MCF 10A (cell line): ENCODE measurements at regions of chr1 and their contacts with region 1.

Region 1: GRCh38 chr1:244864253-244865027 is at the start of gene HNRNPU:
- DNase-seq: peak; percentile 99
- H3K4me3 Mint-ChIP-seq: peak within 1 kb of the TSS; percentile 93
- H3K27ac Mint-ChIP-seq: peak within 1 kb of the TSS; percentile 96
- H3K4me1 Mint-ChIP-seq: peaks cover 32% of the 10 kb centered on the region
- H3K27me3 Mint-ChIP-seq: no peaks in the 10 kb centered on the region
- CTCF ChIP-seq: peak; percentile 51
- total RNA-seq, gene HNRNPU: 454 and 572 TPM in 2 replicates

Region 2: GRCh38 chr1:244672946-244673682 is 191.3 kb before region 1 on chr1:
- CTCF ChIA-PET with region 1: no interaction called
- POLR2A ChIA-PET with region 1: no interaction called
- intact Hi-C with region 1: no loop called
- DNase-seq: no peak
- H3K4me3 Mint-ChIP-seq: no peak overlapping the region
- H3K27ac Mint-ChIP-seq: peak overlapping the region; percentile 21
- H3K4me1 Mint-ChIP-seq: peaks cover 24% of the 10 kb centered on the region
- H3K27me3 Mint-ChIP-seq: no peaks in the 10 kb centered on the region
- CTCF ChIP-seq: no peak

Region 3: DNA sequence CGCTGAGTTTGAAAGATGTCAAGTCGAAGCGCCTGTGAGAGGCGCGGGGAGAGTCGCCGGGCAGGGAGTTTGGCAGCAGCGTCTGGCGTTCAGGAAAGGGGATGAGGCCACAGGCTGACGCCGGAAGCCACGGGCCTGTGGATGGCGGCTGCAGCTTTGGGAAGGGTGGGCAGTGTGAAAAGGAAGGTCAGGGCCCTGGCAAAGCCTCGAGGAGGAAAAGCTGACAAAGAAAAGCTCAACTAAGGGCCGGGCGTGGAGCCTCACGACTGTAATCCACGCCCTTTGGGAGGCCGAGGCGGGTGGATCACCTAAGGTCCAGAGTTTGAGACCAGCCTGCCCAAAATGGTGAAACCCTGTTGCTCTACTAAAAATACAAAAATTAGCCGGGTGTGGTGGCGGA is 54.2 kb before region 1 on chr1:
- CTCF ChIA-PET with region 1: no interaction called
- POLR2A ChIA-PET with region 1: no interaction called
- intact Hi-C with region 1: no loop called
- DNase-seq: no peak
- H3K4me3 Mint-ChIP-seq: no peak overlapping the region
- H3K27ac Mint-ChIP-seq: no peak overlapping the region
- H3K4me1 Mint-ChIP-seq: no peaks in the 10 kb centered on the region
- H3K27me3 Mint-ChIP-seq: no peaks in the 10 kb centered on the region
- CTCF ChIP-seq: no peak

Region 4: GRCh38 chr1:244826712-244827111 is 37.7 kb before region 1 on chr1:
- CTCF ChIA-PET with region 1: no interaction called
- POLR2A ChIA-PET with region 1: interaction called, 45 read pairs
- intact Hi-C with region 1: no loop called
- DNase-seq: no peak
- H3K4me3 Mint-ChIP-seq: no peak overlapping the region
- H3K27ac Mint-ChIP-seq: no peak overlapping the region
- H3K4me1 Mint-ChIP-seq: peaks cover 6% of the 10 kb centered on the region
- H3K27me3 Mint-ChIP-seq: no peaks in the 10 kb centered on the region
- CTCF ChIP-seq: no peak

Region 5: DNA sequence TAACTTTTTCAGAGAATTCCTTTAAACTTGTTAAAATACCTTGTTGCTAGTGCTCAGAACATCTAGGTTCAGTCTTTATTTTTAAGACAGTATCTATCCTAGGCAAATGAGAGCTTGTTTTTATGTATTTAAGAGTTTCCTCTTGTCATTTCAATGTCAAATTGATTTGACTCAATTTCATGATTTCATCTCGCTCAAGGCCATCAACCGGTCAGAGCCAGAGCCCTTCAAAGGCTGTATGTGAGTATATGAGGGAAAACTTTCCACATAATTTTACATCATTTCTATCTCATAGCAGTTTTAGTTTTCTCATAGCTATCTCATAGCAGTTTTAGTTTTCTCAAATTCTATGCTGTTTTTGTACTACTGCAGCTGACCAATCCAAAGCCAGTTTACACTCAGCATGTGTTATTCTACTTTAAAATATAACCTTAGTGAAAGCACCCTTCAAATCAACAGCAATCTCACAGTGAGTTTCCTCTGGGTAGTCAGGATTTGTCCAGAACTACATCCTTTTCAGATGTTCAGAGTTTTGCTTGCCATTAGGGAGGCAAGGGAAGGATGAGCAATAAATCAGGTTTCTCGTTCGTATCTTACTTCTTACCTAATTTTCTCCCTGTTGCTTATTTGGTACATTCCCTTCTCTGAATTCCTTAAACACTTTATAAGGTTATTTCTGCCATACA is 12.8 kb before region 1 on chr1:
- CTCF ChIA-PET with region 1: interaction called, 31 read pairs
- POLR2A ChIA-PET with region 1: interaction called, 1,456 read pairs
- intact Hi-C with region 1: no loop called
- DNase-seq: no peak
- H3K4me3 Mint-ChIP-seq: no peak overlapping the region
- H3K27ac Mint-ChIP-seq: peak overlapping the region; percentile 43
- H3K4me1 Mint-ChIP-seq: peaks cover 25% of the 10 kb centered on the region
- H3K27me3 Mint-ChIP-seq: no peaks in the 10 kb centered on the region
- CTCF ChIP-seq: no peak

Region 6: DNA sequence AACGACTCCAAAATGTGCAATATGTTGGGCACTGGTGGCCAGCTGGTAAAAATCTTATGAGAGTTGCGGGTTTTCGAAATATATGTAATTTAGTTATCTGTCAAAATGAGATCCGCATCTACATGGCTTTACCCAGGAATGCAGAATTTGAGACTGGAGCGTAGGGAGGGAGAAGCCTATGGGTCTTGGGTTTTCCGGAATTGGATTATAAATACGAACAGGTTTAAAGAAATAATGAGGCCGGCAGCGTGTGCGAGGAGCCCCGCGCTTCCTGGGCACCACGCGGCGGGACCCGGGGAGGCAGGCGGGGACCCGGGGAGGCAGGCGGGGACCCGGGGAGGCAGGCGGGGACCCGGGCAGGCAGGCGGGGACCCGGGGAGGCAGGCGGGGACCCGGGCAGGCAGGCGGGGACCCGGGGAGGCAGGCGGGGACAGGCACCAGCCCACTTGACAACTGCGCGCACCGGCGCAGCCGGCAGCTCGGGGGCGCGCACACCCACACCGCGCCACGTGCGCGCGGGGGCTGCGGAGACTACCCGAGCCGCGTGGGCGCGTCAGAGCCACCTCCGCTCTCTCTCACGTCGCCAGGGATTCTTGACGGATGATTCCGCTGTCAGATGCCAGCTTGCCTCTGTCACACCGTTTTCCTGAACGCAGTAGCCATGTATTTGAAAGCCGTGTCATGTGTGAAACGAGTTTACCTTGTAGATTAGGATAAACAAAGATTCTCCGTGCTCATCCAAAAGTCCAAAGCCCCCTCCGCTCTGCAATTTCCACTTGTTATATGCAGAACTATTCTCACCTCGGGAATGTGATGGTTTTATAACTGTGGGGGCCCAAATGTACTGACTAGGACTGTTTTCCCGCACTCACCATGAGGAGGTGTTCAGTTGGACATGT is 54.2 kb after region 1 on chr1:
- CTCF ChIA-PET with region 1: interaction called, 3 read pairs
- POLR2A ChIA-PET with region 1: interaction called, 29 read pairs
- intact Hi-C with region 1: no loop called
- DNase-seq: peak; percentile 38
- H3K4me3 Mint-ChIP-seq: peak overlapping the region; percentile 89
- H3K27ac Mint-ChIP-seq: peak overlapping the region; percentile 81
- H3K4me1 Mint-ChIP-seq: peaks cover 6% of the 10 kb centered on the region
- H3K27me3 Mint-ChIP-seq: no peaks in the 10 kb centered on the region
- CTCF ChIP-seq: no peak

Region 7: DNA sequence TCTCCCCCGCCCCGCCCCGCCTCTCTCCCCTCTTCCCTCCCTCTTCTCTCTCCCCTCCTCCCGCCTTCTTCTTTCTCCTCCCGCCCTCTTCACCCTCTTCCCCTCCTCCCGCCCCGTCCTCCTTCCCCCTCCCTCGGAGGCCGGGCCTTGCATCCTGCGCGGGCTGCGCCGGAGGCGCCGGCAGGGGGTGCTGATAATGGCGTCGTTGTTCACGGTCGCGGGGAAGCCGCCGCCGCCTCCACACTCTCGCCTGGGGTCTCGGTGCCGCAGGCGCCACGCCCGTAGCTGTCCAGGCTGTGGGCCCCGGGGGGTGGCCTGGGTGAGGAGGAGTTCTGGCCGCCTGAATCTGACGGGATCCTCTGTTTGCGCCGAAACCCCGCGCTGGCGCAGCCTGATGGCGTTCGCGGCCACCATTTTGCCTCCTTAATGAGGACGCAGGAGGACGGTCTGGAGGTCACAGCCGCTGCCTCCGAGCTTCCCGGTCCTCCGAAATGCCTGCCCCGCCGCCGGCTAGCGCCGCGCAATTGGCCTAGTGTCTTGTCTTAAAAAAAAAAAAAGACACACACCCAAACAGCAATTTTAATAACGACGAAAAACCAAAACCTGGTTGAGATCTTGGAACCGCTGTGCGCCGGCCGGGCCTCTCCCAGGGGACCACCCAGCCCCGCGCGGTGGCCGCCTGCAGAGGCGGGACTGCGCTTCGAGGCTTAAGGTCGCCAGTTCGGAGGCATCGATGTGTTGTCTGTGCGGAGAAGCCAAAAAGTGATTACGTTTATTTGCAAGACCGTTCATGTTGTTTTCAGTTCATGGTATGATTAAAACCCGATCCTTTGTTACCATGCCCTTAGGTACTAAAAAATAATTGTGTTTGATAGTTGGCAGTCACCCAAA is 106.5 kb after region 1 on chr1:
- CTCF ChIA-PET with region 1: interaction called, 18 read pairs
- POLR2A ChIA-PET with region 1: interaction called, 719 read pairs
- intact Hi-C with region 1: loop called (anchors 1 kb)
- DNase-seq: peak; percentile 100
- H3K4me3 Mint-ChIP-seq: peak overlapping the region; percentile 98
- H3K27ac Mint-ChIP-seq: peak overlapping the region; percentile 100
- H3K4me1 Mint-ChIP-seq: peaks cover 29% of the 10 kb centered on the region
- H3K27me3 Mint-ChIP-seq: no peaks in the 10 kb centered on the region
- CTCF ChIP-seq: peak; percentile 85